Activated T-helper 1 cell treated with anti-CD3 and anti-CD28 coated beads, Interleukin-12 subunit alpha, Interleukin-12 subunit beta, Interleukin-2, Interleukin-4 antibody, amounts not matched to agents 30 ng/mL and 10 ng/mL and 1 ng/mL, durations not matched to agents 14 hours and 24 hours and 36 hours (primary cell): ENCODE measurements at regions of chr14 and their contacts with region 1.

Region 1: DNA sequence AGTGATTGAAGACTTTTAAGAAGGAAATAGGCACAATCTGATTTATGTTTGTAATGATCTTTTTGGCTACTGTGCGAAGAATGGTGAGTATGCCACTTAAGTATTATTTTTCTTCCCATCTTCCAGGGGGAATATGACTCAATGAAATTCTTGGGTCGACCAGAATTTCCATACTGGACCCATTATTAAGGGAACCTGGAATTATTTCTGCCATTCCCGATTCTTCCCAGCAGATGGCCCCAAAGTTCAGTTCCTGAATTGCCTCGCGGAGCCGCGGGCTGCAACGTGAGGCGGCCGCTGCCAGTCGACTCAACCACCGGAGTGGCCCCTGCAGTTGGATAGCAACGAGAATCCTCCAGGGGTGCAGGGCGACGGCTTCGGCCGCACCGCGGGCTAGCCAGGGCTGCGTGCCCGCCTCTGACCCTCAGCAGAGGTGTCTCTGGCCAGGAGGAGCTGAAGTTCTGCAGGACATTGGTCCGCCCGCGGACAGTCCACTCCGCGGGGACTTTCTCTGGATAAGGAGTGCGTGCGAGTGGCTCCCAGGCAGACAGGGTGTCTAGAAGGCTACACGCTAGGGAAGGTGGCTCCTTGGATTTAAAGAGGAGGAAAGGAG is 628 bp upstream of the TSHR start:
- DNase-seq: peak; percentile 67
- H3K4me3 Mint-ChIP-seq: peak overlapping the region; percentile 88
- H3K27ac Mint-ChIP-seq: peak overlapping the region; percentile 62
- H3K4me1 Mint-ChIP-seq: peaks cover 52% of the 10 kb centered on the region
- H3K27me3 Mint-ChIP-seq: peaks cover 29% of the 10 kb centered on the region

Region 2: GRCh38 chr14:80587075-80587724 is 367.6 kb before region 1 on chr14:
- intact Hi-C with region 1: loop called (anchors 1 kb)
- DNase-seq: no peak
- H3K4me3 Mint-ChIP-seq: no peak overlapping the region
- H3K27ac Mint-ChIP-seq: peak overlapping the region; percentile 65
- H3K4me1 Mint-ChIP-seq: peaks cover 10% of the 10 kb centered on the region
- H3K27me3 Mint-ChIP-seq: peaks cover 3% of the 10 kb centered on the region

Region 3: GRCh38 chr14:80941241-80942182 is 13.3 kb before region 1 on chr14 and contains the start of gene CEP128:
- intact Hi-C with region 1: loop called (anchors 1 kb)
- DNase-seq: peak; percentile 79
- H3K4me3 Mint-ChIP-seq: peak within 1 kb of the TSS; percentile 88
- H3K27ac Mint-ChIP-seq: peak within 1 kb of the TSS; percentile 88
- H3K4me1 Mint-ChIP-seq: peaks cover 30% of the 10 kb centered on the region
- H3K27me3 Mint-ChIP-seq: no peaks in the 10 kb centered on the region
- total RNA-seq, gene CEP128: 18.2 and 22.0 TPM in 2 replicates

Region 4: GRCh38 chr14:80987235-80988032 is 32.6 kb after region 1 on chr14:
- intact Hi-C with region 1: loop called (anchors 1 kb)
- DNase-seq: peak; percentile 55
- H3K4me3 Mint-ChIP-seq: no peak overlapping the region
- H3K27ac Mint-ChIP-seq: no peak overlapping the region
- H3K4me1 Mint-ChIP-seq: peaks cover 10% of the 10 kb centered on the region
- H3K27me3 Mint-ChIP-seq: peaks cover under 1% of the 10 kb centered on the region

Region 5: DNA sequence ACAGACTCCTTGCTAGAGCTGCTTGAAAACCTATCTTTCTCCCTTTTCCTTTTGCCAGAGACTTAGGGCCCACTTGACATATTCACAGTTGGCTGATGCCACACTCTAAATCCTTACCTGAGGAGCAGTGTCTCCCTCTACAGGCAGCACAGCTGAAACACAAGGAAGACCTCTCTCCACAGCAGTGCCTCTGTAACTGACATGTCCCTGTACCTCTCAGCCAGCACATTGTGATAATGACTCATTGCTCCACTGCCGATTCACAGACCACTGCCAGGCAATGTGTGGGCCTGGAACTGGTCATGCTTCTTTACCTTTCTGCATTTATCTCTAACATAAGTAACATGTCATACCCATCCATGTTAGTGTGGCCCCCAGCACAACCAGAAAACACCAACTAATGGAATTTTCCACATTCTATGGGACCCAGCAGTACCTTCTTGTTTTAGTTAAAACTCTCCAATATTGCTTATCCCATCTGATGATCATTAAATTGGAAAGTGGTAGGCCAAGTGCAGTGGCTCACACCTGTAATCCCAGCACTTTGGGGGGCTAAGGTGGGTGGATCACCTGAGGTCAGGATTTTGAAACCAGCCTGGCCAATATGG is 209.5 kb after region 1 on chr14:
- intact Hi-C with region 1: loop called (anchors 1 kb)
- DNase-seq: peak; percentile 50
- H3K4me3 Mint-ChIP-seq: no peak overlapping the region
- H3K27ac Mint-ChIP-seq: peak overlapping the region; percentile 1
- H3K4me1 Mint-ChIP-seq: peaks cover 35% of the 10 kb centered on the region
- H3K27me3 Mint-ChIP-seq: no peaks in the 10 kb centered on the region

Region 6: DNA sequence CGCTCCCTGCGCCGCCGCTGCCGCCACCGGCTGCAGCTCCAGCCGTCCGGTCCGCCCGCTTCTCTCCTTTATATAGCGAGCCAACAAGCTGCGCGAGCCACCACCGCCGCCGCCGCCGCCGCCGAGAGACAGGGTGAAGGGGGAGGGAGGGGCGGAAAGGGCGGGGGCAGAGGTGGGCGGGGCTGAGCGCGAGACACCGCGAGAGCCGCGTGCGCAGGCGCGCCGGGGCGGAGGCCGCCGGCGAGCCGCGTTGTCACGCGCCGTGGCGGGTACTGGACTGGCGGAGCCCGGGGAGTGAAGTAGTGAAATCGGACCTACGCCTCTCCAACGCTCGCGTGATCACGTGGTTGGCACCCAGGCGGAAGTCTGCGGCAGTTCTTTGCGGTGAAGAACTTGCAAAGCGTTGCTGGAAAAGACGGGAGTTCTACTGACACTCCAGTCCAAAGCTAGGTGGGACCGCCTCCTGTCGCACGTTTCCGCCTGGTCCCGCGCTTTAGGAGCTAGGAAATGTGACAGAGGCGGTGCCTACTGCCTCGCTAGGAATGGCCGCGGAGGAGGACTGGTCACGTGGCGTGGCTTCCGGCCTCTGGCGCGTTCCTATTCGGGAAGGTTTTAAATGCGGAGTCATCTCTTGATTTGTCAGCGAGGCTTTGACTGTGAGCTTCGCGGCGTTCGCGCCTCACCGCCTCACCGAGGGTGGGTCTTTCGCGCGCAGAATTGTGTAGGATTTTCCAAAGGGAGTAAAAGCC is 266.2 kb after region 1 on chr14 and contains the start of gene GTF2A1:
- intact Hi-C with region 1: loop called (anchors 1 kb)
- DNase-seq: peak; percentile 93
- H3K4me3 Mint-ChIP-seq: peak within 1 kb of the TSS; percentile 99
- H3K27ac Mint-ChIP-seq: peak within 1 kb of the TSS; percentile 99
- H3K4me1 Mint-ChIP-seq: peaks cover 46% of the 10 kb centered on the region
- H3K27me3 Mint-ChIP-seq: no peaks in the 10 kb centered on the region
- total RNA-seq, gene GTF2A1: 41.0 and 42.7 TPM in 2 replicates